PC-3 (cell line): ENCODE measurements at regions of chr1 and their contacts with region 1.

Region 1: GRCh38 chr1:71307451-71307850 is 226.6 kb upstream of the ZRANB2 start:
- DNase-seq: peak; percentile 5
- ATAC-seq: no peak
- H3K4me3 ChIP-seq: no peak overlapping the region
- H3K27ac ChIP-seq: no peak overlapping the region
- H3K4me1 ChIP-seq: peaks cover 24% of the 10 kb centered on the region
- H3K27me3 ChIP-seq: no peaks in the 10 kb centered on the region
- CTCF ChIP-seq: no peak

Region 2: DNA sequence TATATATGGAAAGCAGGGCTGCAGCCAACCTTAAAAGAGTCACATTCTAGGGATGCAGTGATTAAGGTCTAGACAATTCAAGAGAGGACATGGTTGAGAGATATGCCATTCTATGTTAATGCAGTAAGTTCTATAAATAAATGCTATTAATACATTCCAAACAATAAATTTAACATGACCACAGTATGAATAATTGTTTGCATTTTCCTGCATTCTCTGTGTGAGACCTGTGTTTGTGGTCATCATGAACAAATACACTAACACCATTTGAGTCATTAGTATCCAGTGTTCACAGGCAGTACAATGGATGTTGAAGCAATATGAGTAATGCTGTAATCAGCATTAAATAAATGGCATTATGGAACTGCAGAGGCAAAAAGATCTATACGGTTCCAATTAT is 221.1 kb before region 1 on chr1:
- CTCF ChIA-PET with region 1: no interaction called
- POLR2A ChIA-PET with region 1: no interaction called
- intact Hi-C with region 1: loop called (anchors 1 kb)
- DNase-seq: peak; percentile 94
- ATAC-seq: peak; percentile 77
- H3K4me3 ChIP-seq: no peak overlapping the region
- H3K27ac ChIP-seq: peak overlapping the region; percentile 85
- H3K4me1 ChIP-seq: peaks cover 86% of the 10 kb centered on the region
- H3K27me3 ChIP-seq: no peaks in the 10 kb centered on the region
- CTCF ChIP-seq: no peak

Region 3: DNA sequence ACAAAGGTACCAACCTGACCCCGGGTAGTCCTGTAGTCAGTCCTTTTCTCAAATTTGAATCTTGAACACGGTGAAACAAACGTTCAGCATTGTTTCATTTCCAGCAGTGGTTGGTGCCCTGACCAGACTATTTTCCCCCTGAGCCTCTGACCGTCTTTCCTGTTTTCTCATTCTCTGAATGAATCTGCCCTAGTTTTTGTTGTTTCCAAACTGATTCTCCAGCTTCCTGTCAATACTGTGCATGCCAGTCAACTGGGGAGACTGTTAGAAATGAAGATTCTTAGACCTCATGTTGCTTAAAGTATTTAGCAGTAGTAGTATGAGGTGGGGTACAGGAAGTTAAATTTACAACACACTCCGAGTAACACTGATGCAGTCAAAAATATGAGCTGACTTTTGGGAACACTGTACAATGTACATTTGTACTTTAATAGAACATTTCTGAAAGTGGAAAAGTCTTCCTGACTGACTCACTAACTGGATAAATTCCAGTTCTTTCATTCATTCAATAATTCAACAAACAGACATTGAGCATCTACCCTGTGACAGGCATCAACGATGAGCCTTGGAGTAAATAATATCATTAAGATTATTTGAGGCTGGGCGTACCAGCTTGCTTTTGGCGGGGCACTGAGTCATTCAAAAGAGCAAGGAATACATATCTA is 200.7 kb before region 1 on chr1:
- CTCF ChIA-PET with region 1: no interaction called
- POLR2A ChIA-PET with region 1: no interaction called
- intact Hi-C with region 1: no loop called
- DNase-seq: peak; percentile 67
- ATAC-seq: peak; percentile 92
- H3K4me3 ChIP-seq: no peak overlapping the region
- H3K27ac ChIP-seq: 0 out of 2 replicates have a peak overlapping the region, but pooled peaks have one; percentile 9
- H3K4me1 ChIP-seq: peaks cover 13% of the 10 kb centered on the region
- H3K27me3 ChIP-seq: no peaks in the 10 kb centered on the region
- CTCF ChIP-seq: no peak

Region 4: DNA sequence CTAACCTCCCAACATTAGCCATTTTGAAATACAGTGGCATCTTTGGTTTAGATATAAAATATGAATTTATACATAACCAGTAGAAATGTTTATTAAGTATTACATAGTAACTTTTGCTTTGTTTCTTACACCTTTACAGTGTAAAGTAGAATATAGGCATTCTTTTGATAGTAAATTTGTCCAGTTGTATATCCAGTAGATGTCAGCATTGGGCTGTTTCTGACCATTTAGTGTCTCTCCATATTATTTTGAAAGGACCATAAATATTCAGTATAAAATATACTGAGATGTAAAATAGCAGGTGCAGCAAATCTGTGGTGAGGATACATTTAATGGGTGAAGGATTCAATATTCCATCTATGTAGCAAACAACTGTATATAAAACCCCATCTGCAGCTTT is 110.8 kb before region 1 on chr1:
- CTCF ChIA-PET with region 1: no interaction called
- POLR2A ChIA-PET with region 1: no interaction called
- intact Hi-C with region 1: loop called (anchors 5 kb)
- DNase-seq: peak; percentile 55
- ATAC-seq: peak; percentile 46
- H3K4me3 ChIP-seq: no peak overlapping the region
- H3K27ac ChIP-seq: no peak overlapping the region
- H3K4me1 ChIP-seq: no peaks in the 10 kb centered on the region
- H3K27me3 ChIP-seq: 0 out of 2 replicates have a peak, but pooled peaks cover 8% of the 10 kb centered on the region
- CTCF ChIP-seq: peak; percentile 70

Region 5: DNA sequence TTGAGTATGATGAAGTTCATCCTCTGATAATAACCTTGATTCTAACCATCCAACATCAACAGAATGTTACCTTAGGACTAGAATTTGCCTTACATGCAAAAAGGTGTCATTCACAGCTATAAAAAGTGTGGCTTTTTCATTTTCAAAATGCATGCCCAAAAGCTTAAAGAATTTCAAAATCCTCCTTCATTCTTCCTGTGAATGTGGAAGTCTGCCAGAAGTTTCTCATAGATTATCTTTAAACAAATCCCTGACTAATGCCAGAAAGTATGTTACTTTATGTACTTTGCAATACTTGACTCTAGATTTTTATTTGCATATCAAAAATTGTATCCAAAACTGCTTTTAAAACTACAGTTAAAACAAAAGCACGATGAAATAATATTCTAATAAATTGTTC is 44.0 kb after region 1 on chr1:
- CTCF ChIA-PET with region 1: interaction called, 4 read pairs
- POLR2A ChIA-PET with region 1: no interaction called
- intact Hi-C with region 1: loop called (anchors 1 kb)
- DNase-seq: peak; percentile 90
- ATAC-seq: peak; percentile 84
- H3K4me3 ChIP-seq: no peak overlapping the region
- H3K27ac ChIP-seq: peak overlapping the region; percentile 64
- H3K4me1 ChIP-seq: peaks cover 19% of the 10 kb centered on the region
- H3K27me3 ChIP-seq: no peaks in the 10 kb centered on the region
- CTCF ChIP-seq: no peak

Region 6: GRCh38 chr1:71364236-71364635 is 56.8 kb after region 1 on chr1:
- CTCF ChIA-PET with region 1: no interaction called
- POLR2A ChIA-PET with region 1: no interaction called
- intact Hi-C with region 1: loop called (anchors 1 kb)
- DNase-seq: no peak
- ATAC-seq: no peak
- H3K4me3 ChIP-seq: no peak overlapping the region
- H3K27ac ChIP-seq: no peak overlapping the region
- H3K4me1 ChIP-seq: peaks cover 3% of the 10 kb centered on the region; the same call in 1 of the 2 replicates
- H3K27me3 ChIP-seq: no peaks in the 10 kb centered on the region
- CTCF ChIP-seq: no peak

Region 7: GRCh38 chr1:71521655-71522264 is 214.3 kb after region 1 on chr1:
- CTCF ChIA-PET with region 1: no interaction called
- POLR2A ChIA-PET with region 1: no interaction called
- intact Hi-C with region 1: loop called (anchors 5 kb)
- DNase-seq: peak; percentile 70
- ATAC-seq: peak; percentile 66
- H3K4me3 ChIP-seq: no peak overlapping the region
- H3K27ac ChIP-seq: no peak overlapping the region
- H3K4me1 ChIP-seq: peaks cover 5% of the 10 kb centered on the region
- H3K27me3 ChIP-seq: no peaks in the 10 kb centered on the region
- CTCF ChIP-seq: peak; percentile 87